CD8-positive, alpha-beta T cell (primary cell): ENCODE measurements at regions of chr15 and their contacts with region 1.

Region 1: GRCh38 chr15:60520825-60521368 is 42.0 kb upstream of the ICE2 start:
- DNase-seq: peak; percentile 70 to 87 (median 84)
- ATAC-seq: peak; percentile 88
- H3K4me3 ChIP-seq: no peak overlapping the region
- H3K4me3 Mint-ChIP-seq: peak overlapping the region; percentile 15
- H3K27ac ChIP-seq: no peak overlapping the region
- H3K27ac Mint-ChIP-seq: peak overlapping the region; percentile 84
- H3K4me1 ChIP-seq: peaks cover 9% of the 10 kb centered on the region
- H3K4me1 Mint-ChIP-seq: peaks cover 63% of the 10 kb centered on the region
- H3K27me3 ChIP-seq: no peaks in the 10 kb centered on the region
- H3K27me3 Mint-ChIP-seq: no peaks in the 10 kb centered on the region
- CTCF ChIP-seq: peak; percentile 94

Region 2: GRCh38 chr15:60110909-60111308 is 410.0 kb before region 1 on chr15:
- CTCF ChIA-PET with region 1: no interaction called
- POLR2A ChIA-PET with region 1: no interaction called
- intact Hi-C with region 1: no loop called
- DNase-seq: no peak
- ATAC-seq: no peak
- H3K4me3 ChIP-seq: no peak overlapping the region
- H3K4me3 Mint-ChIP-seq: no peak overlapping the region
- H3K27ac ChIP-seq: no peak overlapping the region
- H3K27ac Mint-ChIP-seq: no peak overlapping the region
- H3K4me1 ChIP-seq: no peaks in the 10 kb centered on the region
- H3K4me1 Mint-ChIP-seq: no peaks in the 10 kb centered on the region
- H3K27me3 ChIP-seq: no peaks in the 10 kb centered on the region
- H3K27me3 Mint-ChIP-seq: peaks cover 5% of the 10 kb centered on the region
- CTCF ChIP-seq: no peak

Region 3: GRCh38 chr15:60355148-60355857 is 165.6 kb before region 1 on chr15:
- CTCF ChIA-PET with region 1: interaction called, 35 read pairs
- POLR2A ChIA-PET with region 1: no interaction called
- intact Hi-C with region 1: loop called (anchors 1 to 2 kb)
- DNase-seq: no peak
- ATAC-seq: no peak
- H3K4me3 ChIP-seq: no peak overlapping the region
- H3K4me3 Mint-ChIP-seq: no peak overlapping the region
- H3K27ac ChIP-seq: no peak overlapping the region
- H3K27ac Mint-ChIP-seq: no peak overlapping the region
- H3K4me1 ChIP-seq: no peaks in the 10 kb centered on the region
- H3K4me1 Mint-ChIP-seq: no peaks in the 10 kb centered on the region
- H3K27me3 ChIP-seq: no peaks in the 10 kb centered on the region
- H3K27me3 Mint-ChIP-seq: no peaks in the 10 kb centered on the region
- CTCF ChIP-seq: no peak

Region 4: DNA sequence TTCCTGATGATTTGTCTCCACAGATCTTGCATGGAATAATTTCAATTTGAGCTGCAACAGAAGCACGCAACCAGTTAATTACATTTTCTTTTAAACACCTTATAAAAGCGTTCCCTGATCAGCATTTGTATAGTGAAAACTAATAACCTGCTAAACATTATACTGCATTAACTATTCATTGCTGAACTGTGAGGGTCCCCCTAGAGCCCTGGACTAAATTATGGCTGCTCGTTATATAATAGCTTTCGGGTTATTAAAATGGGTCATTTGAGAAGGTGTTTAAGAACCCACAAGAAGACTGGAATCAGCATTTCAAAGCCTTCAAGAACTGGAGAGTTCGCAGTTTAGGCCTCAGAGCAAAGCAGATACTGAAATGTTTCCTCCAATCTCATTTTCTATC is 10.9 kb after region 1 on chr15:
- CTCF ChIA-PET with region 1: interaction called, 50 read pairs
- POLR2A ChIA-PET with region 1: no interaction called
- intact Hi-C with region 1: no loop called
- DNase-seq: no peak
- ATAC-seq: no peak
- H3K4me3 ChIP-seq: no peak overlapping the region
- H3K4me3 Mint-ChIP-seq: no peak overlapping the region
- H3K27ac ChIP-seq: no peak overlapping the region
- H3K27ac Mint-ChIP-seq: peak overlapping the region; percentile 20
- H3K4me1 ChIP-seq: peaks cover 58% of the 10 kb centered on the region
- H3K4me1 Mint-ChIP-seq: peaks cover 88% of the 10 kb centered on the region
- H3K27me3 ChIP-seq: no peaks in the 10 kb centered on the region
- H3K27me3 Mint-ChIP-seq: no peaks in the 10 kb centered on the region
- CTCF ChIP-seq: no peak

Region 5: DNA sequence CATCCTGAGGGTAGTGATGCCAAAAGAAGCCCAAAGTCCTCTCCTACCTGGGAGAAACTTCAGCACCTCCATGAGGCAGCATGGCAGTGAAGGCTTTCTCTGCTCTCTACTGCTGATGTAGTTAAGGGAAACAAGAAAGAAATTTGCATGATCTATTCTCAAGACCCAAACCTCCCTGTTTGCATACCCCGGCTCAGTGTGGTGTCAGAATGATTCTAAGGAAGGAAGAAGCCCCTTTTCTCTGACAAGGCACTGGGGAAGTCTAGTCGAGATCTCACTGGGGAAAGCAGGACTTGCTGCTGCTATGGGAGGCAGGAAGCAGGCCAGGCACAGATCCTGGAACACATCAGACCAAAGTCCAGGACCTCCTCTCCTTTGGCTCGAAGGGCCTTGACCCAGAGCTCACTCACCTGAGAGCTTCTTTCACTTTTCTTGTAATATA is 47.4 kb after region 1 on chr15:
- CTCF ChIA-PET with region 1: interaction called, 20 read pairs
- POLR2A ChIA-PET with region 1: interaction called, 6 read pairs
- intact Hi-C with region 1: no loop called
- DNase-seq: peak in 1 of 9 experiments; percentile 41
- ATAC-seq: no peak
- H3K4me3 ChIP-seq: no peak overlapping the region
- H3K4me3 Mint-ChIP-seq: peak overlapping the region; percentile 27
- H3K27ac ChIP-seq: peak overlapping the region in 1 of 2 experiments; percentile 68
- H3K27ac Mint-ChIP-seq: peak overlapping the region; percentile 80
- H3K4me1 ChIP-seq: peaks cover 93% of the 10 kb centered on the region
- H3K4me1 Mint-ChIP-seq: peaks cover 93% of the 10 kb centered on the region
- H3K27me3 ChIP-seq: no peaks in the 10 kb centered on the region
- H3K27me3 Mint-ChIP-seq: no peaks in the 10 kb centered on the region
- CTCF ChIP-seq: no peak

Region 6: DNA sequence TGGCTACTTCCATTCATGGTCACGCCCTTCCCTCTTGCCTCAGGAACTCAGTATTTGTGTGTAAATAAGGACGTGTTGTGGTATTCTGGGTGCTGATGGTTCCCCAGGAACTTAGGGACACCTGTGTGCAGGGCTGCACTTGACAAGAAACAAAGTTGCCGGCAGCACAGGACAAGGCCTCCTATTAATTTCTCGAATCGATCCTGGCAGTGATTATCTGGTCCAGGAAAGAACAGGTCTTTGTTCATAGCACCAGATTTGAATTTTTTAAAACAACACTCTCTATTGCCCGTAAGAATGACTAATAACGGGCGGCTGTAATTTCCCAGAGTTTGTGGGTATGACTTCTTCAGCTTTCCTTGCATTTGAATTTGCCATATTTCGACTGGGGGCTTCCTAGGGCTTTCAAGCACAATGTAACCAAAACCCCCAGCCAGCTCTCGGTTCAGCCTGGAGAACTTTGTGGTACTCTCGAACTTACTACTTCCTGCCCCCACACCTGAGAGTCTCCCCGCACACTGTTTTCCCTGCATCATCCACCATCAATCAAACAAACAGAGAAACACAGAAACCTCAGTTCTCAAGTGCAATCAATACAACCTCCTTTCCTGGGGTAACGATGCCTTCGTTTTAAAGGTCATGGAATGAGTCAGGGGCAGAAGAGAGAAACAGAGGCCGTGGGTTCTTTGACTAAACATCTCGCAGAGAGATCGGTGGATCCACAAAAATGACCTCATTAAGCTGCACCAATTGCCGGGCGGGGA is 199.8 kb after region 1 on chr15:
- CTCF ChIA-PET with region 1: no interaction called
- POLR2A ChIA-PET with region 1: no interaction called
- intact Hi-C with region 1: no loop called
- DNase-seq: peak in 8 of 9 experiments; percentile 10 to 63 (median 41)
- ATAC-seq: peak; percentile 78
- H3K4me3 ChIP-seq: peak overlapping the region; percentile 29 to 46
- H3K4me3 Mint-ChIP-seq: peak overlapping the region; percentile 77
- H3K27ac ChIP-seq: peak overlapping the region in 1 of 2 experiments; percentile 52
- H3K27ac Mint-ChIP-seq: peak overlapping the region; percentile 78
- H3K4me1 ChIP-seq: peaks cover 31% of the 10 kb centered on the region
- H3K4me1 Mint-ChIP-seq: peaks cover 42% of the 10 kb centered on the region
- H3K27me3 ChIP-seq: no peaks in the 10 kb centered on the region
- H3K27me3 Mint-ChIP-seq: no peaks in the 10 kb centered on the region
- CTCF ChIP-seq: no peak

Region 7: GRCh38 chr15:60865507-60865906 is 344.6 kb after region 1 on chr15:
- CTCF ChIA-PET with region 1: interaction called, 19 read pairs
- POLR2A ChIA-PET with region 1: no interaction called
- intact Hi-C with region 1: no loop called
- DNase-seq: no peak
- ATAC-seq: no peak
- H3K4me3 ChIP-seq: no peak overlapping the region
- H3K4me3 Mint-ChIP-seq: no peak overlapping the region
- H3K27ac ChIP-seq: no peak overlapping the region
- H3K27ac Mint-ChIP-seq: no peak overlapping the region
- H3K4me1 ChIP-seq: peaks cover 7% of the 10 kb centered on the region
- H3K4me1 Mint-ChIP-seq: peaks cover 26% of the 10 kb centered on the region
- H3K27me3 ChIP-seq: no peaks in the 10 kb centered on the region
- H3K27me3 Mint-ChIP-seq: no peaks in the 10 kb centered on the region
- CTCF ChIP-seq: no peak

Region 8: GRCh38 chr15:61069394-61070075 is 548.6 kb after region 1 on chr15:
- CTCF ChIA-PET with region 1: no interaction called
- POLR2A ChIA-PET with region 1: no interaction called
- intact Hi-C with region 1: no loop called
- DNase-seq: no peak
- ATAC-seq: no peak
- H3K4me3 ChIP-seq: no peak overlapping the region
- H3K4me3 Mint-ChIP-seq: no peak overlapping the region
- H3K27ac ChIP-seq: no peak overlapping the region
- H3K27ac Mint-ChIP-seq: no peak overlapping the region
- H3K4me1 ChIP-seq: no peaks in the 10 kb centered on the region
- H3K4me1 Mint-ChIP-seq: no peaks in the 10 kb centered on the region
- H3K27me3 ChIP-seq: no peaks in the 10 kb centered on the region
- H3K27me3 Mint-ChIP-seq: peaks cover 21% of the 10 kb centered on the region
- CTCF ChIP-seq: no peak

Region 9: DNA sequence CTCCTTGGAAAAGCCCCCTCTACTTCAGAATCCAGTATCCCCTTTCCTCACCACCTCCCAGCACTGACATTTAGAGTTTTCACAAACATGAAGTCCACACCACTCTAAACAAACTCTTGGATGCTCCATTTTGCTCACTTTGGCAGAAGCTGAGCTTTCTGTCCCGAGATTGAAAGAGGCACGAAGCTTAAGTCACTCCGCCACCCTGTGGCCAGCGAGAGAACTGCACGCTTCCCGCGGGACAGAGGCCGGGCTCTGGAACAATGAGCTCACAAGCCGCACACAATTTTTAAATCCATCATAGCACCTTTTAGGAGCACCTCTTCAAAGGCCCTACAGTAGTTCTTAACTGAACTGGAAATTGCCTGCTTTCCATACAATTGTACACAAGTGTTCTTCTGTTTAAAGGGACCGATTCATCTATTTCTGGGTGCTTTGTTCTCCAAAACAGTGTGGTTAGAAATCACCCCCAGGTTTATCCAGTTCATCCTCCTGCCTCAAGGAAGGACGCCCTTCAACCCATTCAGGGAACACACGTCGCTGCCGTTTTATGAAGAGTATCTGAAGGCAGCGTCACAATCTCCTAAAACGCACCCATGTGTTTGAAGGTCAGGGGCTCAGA is 1313.3 kb after region 1 on chr15:
- CTCF ChIA-PET with region 1: interaction called, 3 read pairs
- POLR2A ChIA-PET with region 1: no interaction called
- intact Hi-C with region 1: loop called in 1 of 2 experiments (anchors 5 kb)
- DNase-seq: peak; percentile 39 to 78 (median 71)
- ATAC-seq: peak; percentile 85
- H3K4me3 ChIP-seq: no peak overlapping the region
- H3K4me3 Mint-ChIP-seq: no peak overlapping the region
- H3K27ac ChIP-seq: no peak overlapping the region
- H3K27ac Mint-ChIP-seq: no peak overlapping the region
- H3K4me1 ChIP-seq: no peaks in the 10 kb centered on the region
- H3K4me1 Mint-ChIP-seq: peaks cover 8% of the 10 kb centered on the region
- H3K27me3 ChIP-seq: peaks cover 0 to 4% of the 10 kb centered on the region in 2 experiments
- H3K27me3 Mint-ChIP-seq: peaks cover 22% of the 10 kb centered on the region
- CTCF ChIP-seq: peak; percentile 90